Cardiac septum (tissue), 1 donor: ENCODE measurements at regions of chr3 and their contacts with region 1.

Region 1: DNA sequence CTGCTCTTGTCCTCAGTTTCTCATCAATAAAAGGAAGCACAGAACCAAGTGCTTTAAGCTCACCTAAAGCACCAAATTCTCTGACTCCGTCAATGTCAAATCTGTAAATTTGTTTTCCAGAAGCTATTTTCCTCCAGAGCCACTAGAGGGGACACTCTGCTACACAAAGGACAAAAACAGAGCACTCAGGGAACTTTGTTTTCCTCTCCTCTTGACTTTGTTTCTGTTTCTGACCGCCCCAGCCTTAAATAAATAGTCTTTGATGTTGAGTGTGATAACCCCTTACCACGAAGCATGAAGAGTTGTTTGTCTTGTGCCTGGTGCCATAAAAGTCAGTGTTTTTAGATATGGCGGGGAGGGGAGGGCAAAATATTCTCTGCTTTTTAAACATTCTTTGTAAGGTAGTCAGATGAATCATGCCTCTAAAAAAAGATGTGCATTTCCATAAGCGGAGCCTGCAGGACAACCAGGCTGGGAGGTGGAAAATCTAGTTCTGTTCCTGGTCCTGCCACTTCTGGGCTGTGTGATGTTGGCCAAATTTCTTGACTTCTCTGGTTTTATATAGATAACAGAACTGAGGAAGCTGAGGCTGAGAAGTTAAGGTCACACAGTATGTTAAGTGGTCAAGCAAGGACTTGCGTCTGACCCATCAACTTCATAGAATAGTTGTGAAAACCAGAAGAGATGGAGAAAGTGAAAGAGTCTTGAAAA is 7.3 kb upstream of the ZBTB38 start:
- DNase-seq: no peak

Region 2: DNA sequence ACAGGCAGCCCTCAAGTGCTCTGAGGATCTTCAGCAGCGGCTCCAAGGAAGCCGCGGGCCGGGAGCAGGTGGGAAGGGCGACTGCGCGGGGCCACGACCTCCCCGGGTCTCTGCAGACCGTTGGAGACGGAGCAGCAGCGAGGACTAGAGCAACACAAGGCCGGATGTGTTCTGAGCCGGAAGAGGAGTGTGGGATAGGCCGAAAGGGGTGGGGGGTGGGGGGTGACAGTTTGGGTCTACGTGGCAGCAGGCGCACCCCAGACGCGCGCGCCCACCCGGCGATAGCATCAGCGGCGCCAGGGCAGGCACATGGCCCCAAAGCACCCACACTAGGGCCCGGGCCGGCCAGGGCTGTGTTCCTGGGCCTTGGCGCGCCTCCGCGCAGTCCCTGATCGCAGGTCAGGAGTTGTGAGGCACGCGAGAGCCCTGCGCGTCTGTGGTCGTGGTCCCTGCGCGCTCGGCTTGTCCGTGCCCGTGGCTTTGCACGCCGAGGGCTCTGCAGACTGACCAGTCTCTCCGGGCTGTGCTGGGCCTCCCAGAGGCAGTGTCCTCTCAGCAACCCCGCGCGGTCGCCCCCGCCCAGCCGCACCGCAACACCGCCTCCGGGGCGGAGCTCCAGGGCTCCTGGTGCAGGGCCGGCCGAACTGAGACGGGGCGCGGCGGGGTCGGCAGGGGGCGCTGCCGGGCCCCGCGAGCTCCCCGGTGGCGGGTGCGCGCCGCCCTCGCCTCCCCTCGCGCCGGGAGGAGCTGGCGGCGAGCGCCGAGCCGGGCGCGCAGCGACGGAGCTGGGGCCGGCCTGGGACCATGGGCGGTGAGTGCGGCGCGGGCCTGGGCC is 129.7 kb before region 1 on chr3 and contains the start of gene PXYLP1:
- intact Hi-C with region 1: no loop called
- DNase-seq: peak; percentile 98
- total RNA-seq, gene PXYLP1: 38.8 TPM

Region 3: DNA sequence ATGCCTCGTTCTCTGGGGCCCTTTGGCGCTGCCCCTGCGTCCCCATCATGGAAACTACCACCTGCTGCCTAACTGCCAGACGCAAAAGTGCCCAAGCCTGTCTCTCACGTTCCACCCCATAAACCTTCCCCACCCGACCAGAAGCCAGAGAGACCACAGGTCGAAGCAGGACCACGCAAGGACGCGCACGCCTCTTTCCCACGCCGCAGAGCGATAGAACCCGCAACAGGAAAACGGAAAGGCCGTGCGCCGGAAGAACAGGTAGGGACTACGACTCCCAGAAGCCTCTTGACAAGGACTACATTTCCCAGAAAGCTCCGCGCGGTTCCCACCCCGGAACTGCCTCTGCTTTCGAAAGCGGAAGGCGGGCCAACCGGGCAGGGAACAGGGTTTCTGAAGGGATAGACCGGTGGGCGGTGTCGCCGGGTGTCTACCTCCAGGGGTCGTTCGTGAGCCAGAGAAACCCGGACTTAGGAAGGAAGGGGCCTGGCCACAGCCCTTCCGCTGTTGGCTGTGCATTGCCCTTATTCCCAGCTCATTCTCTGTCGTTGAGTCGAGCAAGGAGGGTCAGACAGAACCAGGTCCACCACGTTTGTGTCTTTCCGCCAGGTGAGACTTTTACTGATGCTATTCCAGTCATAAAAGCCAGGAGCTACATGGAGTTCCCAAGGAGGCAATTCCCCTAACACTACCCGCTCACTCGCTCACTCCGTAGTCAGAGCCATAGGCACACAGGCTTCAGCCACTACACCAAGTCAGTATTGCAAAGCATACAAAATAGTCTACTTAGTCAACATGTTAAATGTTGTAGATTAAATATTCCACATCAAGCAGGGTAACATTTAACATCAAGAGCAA is 49.3 kb before region 1 on chr3:
- intact Hi-C with region 1: loop called (anchors 2 kb)
- DNase-seq: peak; percentile 99

Region 4: GRCh38 chr3:141538568-141539240 is 177.7 kb after region 1 on chr3:
- intact Hi-C with region 1: no loop called
- DNase-seq: no peak